ENCODE measurements at regions of chr2 and their contacts with region 1.

Region 1: GRCh38 chr2:200735061-200735460 is 76.6 kb upstream of the BZW1 start:
- DNase-seq: no peak
- H3K4me3 ChIP-seq: no peak overlapping the region
- CTCF ChIP-seq: no peak

Region 2: DNA sequence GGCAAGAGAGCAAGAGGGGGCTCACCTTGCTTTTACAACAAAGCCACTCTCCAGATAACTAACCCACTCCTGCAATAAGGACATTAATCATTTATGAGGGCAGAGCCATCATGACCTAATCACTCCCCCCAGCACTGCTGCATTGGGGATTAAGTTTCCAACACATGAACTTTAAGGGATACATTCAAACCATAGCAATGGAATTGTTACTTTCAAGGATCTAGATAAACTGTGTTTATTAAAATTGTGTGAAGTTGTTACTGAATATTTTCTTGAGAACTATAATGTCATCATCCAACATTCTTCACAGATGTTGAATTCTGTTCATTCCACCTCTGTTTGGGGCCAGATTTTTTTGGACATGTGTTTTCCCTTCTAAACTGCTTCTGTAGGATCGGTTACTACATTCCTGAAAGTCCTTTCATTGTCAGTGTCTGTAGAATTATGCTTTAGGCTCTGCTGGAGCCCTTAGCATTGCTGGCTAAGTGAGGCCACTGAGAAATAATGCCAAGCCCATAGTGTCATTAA is 378.1 kb before region 1 on chr2:
- in situ Hi-C with region 1: no loop called
- DNase-seq: peak; percentile 62
- H3K4me3 ChIP-seq: no peak overlapping the region
- CTCF ChIP-seq: no peak

Region 3: GRCh38 chr2:200782243-200782642 is 47.2 kb after region 1 on chr2:
- in situ Hi-C with region 1: no loop called
- DNase-seq: no peak
- H3K4me3 ChIP-seq: no peak overlapping the region
- CTCF ChIP-seq: no peak

Region 4: DNA sequence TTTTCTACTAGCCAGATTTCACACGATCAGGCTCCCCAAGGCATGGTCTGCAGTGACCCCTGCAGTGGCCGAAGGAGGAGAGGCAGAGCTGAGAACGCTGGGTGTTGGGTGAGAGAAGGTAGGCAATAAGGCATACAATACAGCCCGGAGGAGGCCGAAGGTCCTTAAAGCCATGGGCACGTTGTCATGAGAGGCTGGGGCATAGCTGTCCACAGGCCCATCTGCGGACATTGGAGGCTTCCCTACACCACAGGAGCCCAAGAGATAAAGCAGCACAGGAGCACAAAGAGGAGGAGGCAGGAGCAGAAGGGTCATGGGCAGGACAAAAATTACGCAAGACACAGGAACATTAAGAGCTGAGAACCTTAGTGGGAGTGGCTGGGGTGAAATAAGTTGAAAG is 60.0 kb after region 1 on chr2:
- in situ Hi-C with region 1: loop called (anchors 5 kb)
- DNase-seq: no peak
- H3K4me3 ChIP-seq: no peak overlapping the region
- CTCF ChIP-seq: no peak

Region 5: GRCh38 chr2:200811336-200812121 is 76.5 kb after region 1 on chr2 and contains the start of gene BZW1:
- in situ Hi-C with region 1: no loop called
- DNase-seq: peak; percentile 92
- H3K4me3 ChIP-seq: peak within 1 kb of the TSS; percentile 78
- CTCF ChIP-seq: no peak

Measured in astrocyte of the cerebellum (primary cell).